Activated B cell treated with CpG ODN at 0.5 μM for 24 hours (primary cell): ENCODE measurements at regions of chr11 and their contacts with region 1.

Region 1: GRCh38 chr11:76235233-76236091 is 29.2 kb upstream of the WNT11 start:
- DNase-seq: peak; percentile 82
- ATAC-seq: peak; percentile 78
- H3K4me3 Mint-ChIP-seq: peak overlapping the region; percentile 95
- H3K27ac Mint-ChIP-seq: peak overlapping the region; percentile 95
- H3K4me1 Mint-ChIP-seq: peaks cover 32% of the 10 kb centered on the region
- H3K27me3 Mint-ChIP-seq: peaks cover 7% of the 10 kb centered on the region
- CTCF ChIP-seq: no peak

Region 2: DNA sequence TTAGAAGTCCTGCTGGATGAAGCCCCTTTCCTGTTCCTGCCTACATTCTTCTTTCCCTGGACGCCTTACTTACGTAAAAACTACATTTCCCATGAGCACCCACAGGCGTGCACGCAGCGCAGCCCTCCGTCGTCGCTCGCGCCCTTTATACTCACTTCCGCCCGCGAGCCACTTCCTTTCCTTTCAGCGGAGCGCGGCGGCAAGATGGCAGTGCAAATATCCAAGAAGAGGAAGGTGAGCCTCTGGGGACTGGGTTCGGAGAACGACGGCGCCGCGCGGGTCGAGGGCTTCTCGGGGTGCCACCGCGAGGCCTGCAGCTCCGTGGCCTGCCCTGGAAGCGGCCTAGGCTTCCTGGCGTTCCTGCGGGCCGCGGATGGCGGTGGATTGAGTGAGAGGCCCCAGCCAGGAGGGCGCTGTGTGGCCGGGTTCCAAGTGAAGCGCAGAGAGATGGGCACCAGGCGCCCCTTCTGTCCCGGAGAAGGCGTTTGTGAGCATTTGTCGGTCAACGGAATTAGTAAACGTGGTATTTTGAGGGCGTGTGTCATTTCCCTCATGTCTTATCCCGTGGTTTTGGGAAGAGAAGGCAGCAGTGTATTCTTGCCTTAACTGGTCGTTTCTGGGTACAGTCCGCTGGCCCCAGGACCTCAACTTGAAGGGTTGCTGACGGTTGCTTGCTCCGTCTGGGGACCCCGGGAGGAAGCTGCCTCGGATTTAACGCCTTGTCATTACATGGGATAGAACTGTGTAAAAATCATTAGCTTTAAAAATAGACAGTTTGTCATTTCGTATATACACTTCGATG is 835.9 kb before region 1 on chr11 and contains the start of gene RPS3:
- CTCF ChIA-PET with region 1: no interaction called
- POLR2A ChIA-PET with region 1: no interaction called
- intact Hi-C with region 1: loop called (anchors 5 kb)
- DNase-seq: peak; percentile 83
- ATAC-seq: peak; percentile 91
- H3K4me3 Mint-ChIP-seq: peak within 1 kb of the TSS; percentile 99
- H3K27ac Mint-ChIP-seq: peak within 1 kb of the TSS; percentile 98
- H3K4me1 Mint-ChIP-seq: peaks cover 49% of the 10 kb centered on the region
- H3K27me3 Mint-ChIP-seq: peaks cover 5% of the 10 kb centered on the region
- CTCF ChIP-seq: no peak
- total RNA-seq, gene RPS3: 4,635 and 5,236 TPM in 2 replicates

Region 3: GRCh38 chr11:75768112-75768908 is 467.2 kb before region 1 on chr11 and contains the start of gene DGAT2:
- CTCF ChIA-PET with region 1: no interaction called
- POLR2A ChIA-PET with region 1: no interaction called
- intact Hi-C with region 1: loop called (anchors 1 kb)
- DNase-seq: peak; percentile 84
- ATAC-seq: peak; percentile 76
- H3K4me3 Mint-ChIP-seq: peak within 1 kb of the TSS; percentile 83
- H3K27ac Mint-ChIP-seq: peak within 1 kb of the TSS; percentile 87
- H3K4me1 Mint-ChIP-seq: peaks cover 56% of the 10 kb centered on the region
- H3K27me3 Mint-ChIP-seq: no peaks in the 10 kb centered on the region
- CTCF ChIP-seq: no peak
- total RNA-seq, gene DGAT2: 6.9 and 7.9 TPM in 2 replicates

Region 4: GRCh38 chr11:76380967-76381719 is 145.7 kb after region 1 on chr11 and contains the starts of genes GVQW3 and THAP12:
- CTCF ChIA-PET with region 1: no interaction called
- POLR2A ChIA-PET with region 1: no interaction called
- intact Hi-C with region 1: loop called (anchors 1 kb)
- DNase-seq: peak; percentile 97
- ATAC-seq: peak; percentile 87
- H3K4me3 Mint-ChIP-seq: peak within 1 kb of the TSS; percentile 94
- H3K27ac Mint-ChIP-seq: peak within 1 kb of the TSS; percentile 88
- H3K4me1 Mint-ChIP-seq: peaks cover 63% of the 10 kb centered on the region
- H3K27me3 Mint-ChIP-seq: no peaks in the 10 kb centered on the region
- CTCF ChIP-seq: no peak
- total RNA-seq, gene GVQW3: 2.6 and 3.0 TPM in 2 replicates
- total RNA-seq, gene THAP12: 56.5 and 60.2 TPM in 2 replicates